Activated B cell treated with CpG ODN at 0.5 μM for 24 hours (primary cell): ENCODE measurements at regions of chr5 and their contacts with region 1.

Region 1: GRCh38 chr5:98880151-98880550 is 48.7 kb downstream of the CHD1 start:
- DNase-seq: no peak
- ATAC-seq: no peak
- H3K4me3 Mint-ChIP-seq: no peak overlapping the region
- H3K27ac Mint-ChIP-seq: no peak overlapping the region
- H3K4me1 Mint-ChIP-seq: peaks cover 6% of the 10 kb centered on the region
- H3K27me3 Mint-ChIP-seq: no peaks in the 10 kb centered on the region
- CTCF ChIP-seq: no peak

Region 2: GRCh38 chr5:98898743-98899142 is 18.6 kb after region 1 on chr5:
- CTCF ChIA-PET with region 1: no interaction called
- POLR2A ChIA-PET with region 1: interaction called, 4 read pairs
- intact Hi-C with region 1: loop called (anchors 2 kb)
- DNase-seq: no peak
- ATAC-seq: no peak
- H3K4me3 Mint-ChIP-seq: no peak overlapping the region
- H3K27ac Mint-ChIP-seq: no peak overlapping the region
- H3K4me1 Mint-ChIP-seq: no peaks in the 10 kb centered on the region
- H3K27me3 Mint-ChIP-seq: no peaks in the 10 kb centered on the region
- CTCF ChIP-seq: no peak